Esophagus muscularis mucosa (tissue), 4 donors: ENCODE measurements at regions of chr12 and their contacts with region 1.

Region 1: DNA sequence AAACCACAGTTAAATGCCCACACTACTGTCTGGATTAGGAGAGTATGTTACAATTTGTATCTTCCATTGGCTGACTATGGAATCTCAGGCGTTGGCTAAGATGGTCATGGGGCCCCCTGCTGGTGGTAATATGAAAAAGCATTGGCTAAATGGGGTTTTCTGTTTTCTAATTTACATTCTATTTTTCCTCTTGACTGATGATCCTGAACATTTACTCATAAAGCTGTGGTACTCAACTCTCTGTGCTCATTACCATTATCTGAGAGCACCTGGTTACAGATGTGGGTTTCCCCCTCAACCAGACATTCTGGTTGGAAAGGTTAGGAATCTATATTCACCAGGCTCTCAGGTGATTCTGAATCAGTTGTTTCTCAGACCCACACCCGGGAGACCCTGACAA is 64.8 kb downstream of the WSCD2 start:
- DNase-seq: no peak
- H3K4me3 ChIP-seq: no peak overlapping the region
- H3K27ac ChIP-seq: no peak overlapping the region
- H3K4me1 ChIP-seq: peaks cover 6 to 39% (median 37%) of the 10 kb centered on the region in 4 donors
- H3K27me3 ChIP-seq: no peaks in the 10 kb centered on the region
- CTCF ChIP-seq: peak; percentile 80 to 82 (median 81)
- EP300 ChIP-seq: no peak
- POLR2A ChIP-seq: no peak

Region 2: DNA sequence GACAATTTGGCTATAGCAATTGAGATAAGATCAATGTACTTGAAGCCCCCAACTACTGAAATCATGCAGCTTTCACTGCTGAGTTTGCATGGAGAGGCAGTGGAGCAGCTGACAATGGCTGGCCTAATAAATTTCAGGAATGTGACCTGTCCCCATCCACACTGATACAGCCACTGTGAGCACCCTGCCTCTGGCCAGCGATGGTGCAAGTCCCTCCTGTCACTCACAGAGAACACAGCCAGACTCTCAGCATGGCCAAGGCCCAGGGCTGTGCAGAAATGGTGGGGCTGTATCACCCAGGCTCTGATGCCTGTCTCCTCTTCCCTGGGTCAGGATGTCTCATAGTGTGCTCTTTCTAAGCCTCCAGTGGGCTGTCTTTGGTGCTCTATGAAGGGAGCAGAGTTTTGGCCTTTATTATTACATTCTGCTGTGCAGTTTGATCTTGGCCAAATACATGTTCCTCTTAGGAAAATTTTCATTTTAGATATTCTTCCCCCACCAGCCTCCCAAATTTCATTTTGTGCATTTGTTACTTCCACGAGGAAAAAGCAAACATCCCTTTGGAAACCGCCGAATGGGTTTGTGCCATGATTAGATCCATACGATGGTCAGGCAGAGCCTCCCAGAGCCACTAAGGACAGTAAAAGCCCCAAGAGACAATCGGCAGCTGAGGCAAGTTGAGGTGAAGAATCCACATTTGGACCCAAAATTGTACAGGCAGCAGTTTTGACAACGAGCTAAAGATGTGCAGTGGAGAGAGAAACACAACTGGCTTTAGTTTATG is 150.0 kb before region 1 on chr12:
- intact Hi-C with region 1: no loop called
- DNase-seq: no peak
- H3K4me3 ChIP-seq: no peak overlapping the region
- H3K27ac ChIP-seq: no peak overlapping the region
- H3K4me1 ChIP-seq: peaks cover 0 to 7% (median 3%) of the 10 kb centered on the region in 4 donors
- H3K27me3 ChIP-seq: no peaks in the 10 kb centered on the region
- CTCF ChIP-seq: no peak
- EP300 ChIP-seq: no peak
- POLR2A ChIP-seq: no peak

Region 3: DNA sequence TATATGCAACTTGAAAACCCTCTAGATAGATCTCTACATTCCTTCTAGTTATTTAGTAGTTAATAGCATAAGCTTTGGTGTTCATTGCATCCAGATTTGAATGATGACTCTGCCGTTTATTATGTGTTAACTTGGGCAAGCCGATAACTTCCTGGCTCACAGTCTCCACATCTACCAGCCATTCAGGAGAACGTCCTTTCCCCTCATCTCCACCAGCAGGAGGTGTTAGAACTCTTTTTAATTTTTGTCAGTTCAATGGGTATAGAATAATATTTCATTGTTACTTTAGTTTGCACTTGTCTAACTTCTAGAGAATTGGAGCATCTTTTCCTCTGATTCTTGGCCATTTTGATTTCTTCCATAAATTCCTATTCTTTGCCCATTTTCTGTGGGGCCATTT is 94.8 kb before region 1 on chr12:
- intact Hi-C with region 1: loop called (anchors 2 kb)
- DNase-seq: no peak
- H3K4me3 ChIP-seq: no peak overlapping the region
- H3K27ac ChIP-seq: no peak overlapping the region
- H3K4me1 ChIP-seq: peaks cover 0 to 27% (median 16%) of the 10 kb centered on the region in 4 donors
- H3K27me3 ChIP-seq: no peaks in the 10 kb centered on the region
- CTCF ChIP-seq: peak; percentile 61 to 72 (median 67)
- EP300 ChIP-seq: no peak
- POLR2A ChIP-seq: no peak

Region 4: GRCh38 chr12:108133482-108133881 is 60.4 kb before region 1 on chr12:
- intact Hi-C with region 1: loop called (anchors 5 kb)
- DNase-seq: no peak
- H3K4me3 ChIP-seq: peak overlapping the region in 3 of 4 donors; percentile 22 to 80 (median 77)
- H3K27ac ChIP-seq: peak overlapping the region; percentile 44 to 72 (median 52)
- H3K4me1 ChIP-seq: peaks cover 10 to 87% (median 75%) of the 10 kb centered on the region in 4 donors
- H3K27me3 ChIP-seq: peaks cover 0 to 18% (median 2%) of the 10 kb centered on the region in 4 donors
- CTCF ChIP-seq: no peak
- EP300 ChIP-seq: no peak
- POLR2A ChIP-seq: no peak

Region 5: DNA sequence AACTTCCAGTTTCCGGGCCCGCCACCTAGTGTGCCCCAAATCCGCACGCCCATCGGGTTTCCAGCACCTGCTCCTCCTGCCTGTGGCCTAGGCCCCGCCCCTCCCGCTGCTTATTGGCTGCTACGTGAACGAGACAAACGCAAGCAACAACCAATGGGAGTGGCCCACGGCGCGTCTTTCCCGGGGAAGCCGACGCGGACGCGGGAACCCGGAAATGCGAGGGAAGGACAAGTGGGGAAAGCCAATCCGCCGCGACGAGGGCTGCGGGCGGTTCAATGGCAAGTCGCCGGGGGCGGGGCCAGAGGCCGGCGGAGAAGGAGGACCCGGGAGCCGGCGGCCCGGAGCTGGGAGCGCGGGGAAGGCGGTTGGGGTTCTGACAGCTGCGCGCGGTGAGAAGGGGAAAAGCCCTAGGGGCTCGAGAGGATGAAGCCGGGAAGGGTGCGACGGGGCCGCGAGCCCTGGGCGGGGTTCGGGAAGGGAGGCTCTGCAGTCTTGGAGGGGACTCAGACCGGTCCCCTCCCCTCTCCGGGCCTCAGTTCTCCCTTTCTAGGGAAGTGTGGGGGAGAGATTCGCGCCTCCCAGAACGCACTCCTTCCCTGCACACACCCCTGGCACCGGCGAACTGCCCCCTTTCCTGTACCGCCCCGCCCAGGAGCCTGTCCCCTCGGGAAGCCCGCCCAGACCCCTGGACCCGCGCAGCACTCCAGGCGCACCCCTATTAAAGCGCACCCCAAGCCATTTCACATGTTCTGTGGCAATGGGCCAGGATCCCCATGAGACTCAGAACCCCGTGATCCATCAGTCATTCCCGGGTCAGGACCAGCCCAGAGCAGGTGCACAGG is 321.3 kb after region 1 on chr12 and contains the start of gene FICD:
- intact Hi-C with region 1: loop called (anchors 5 kb)
- DNase-seq: peak; percentile 100
- H3K4me3 ChIP-seq: peak within 1 kb of the TSS; percentile 74 to 94 (median 86)
- H3K27ac ChIP-seq: peak within 1 kb of the TSS; percentile 74 to 84 (median 78)
- H3K4me1 ChIP-seq: peaks cover 13 to 37% (median 26%) of the 10 kb centered on the region in 4 donors
- H3K27me3 ChIP-seq: no peaks in the 10 kb centered on the region
- CTCF ChIP-seq: no peak
- EP300 ChIP-seq: no peak
- POLR2A ChIP-seq: no peak
- total RNA-seq, gene FICD: 5.6 to 7.2 (median 6.5) TPM